ENCODE measurements at regions of chr4 and their contacts with region 1.

Region 1: GRCh38 chr4:89024051-89024675 is 32.8 kb downstream of the FAM13A start:
- DNase-seq: no peak
- ATAC-seq: peak; percentile 92 to 99 (median 95)
- H3K4me3 ChIP-seq: no peak overlapping the region
- H3K27ac ChIP-seq: no peak overlapping the region
- H3K4me1 ChIP-seq: peaks cover 16% of the 10 kb centered on the region
- H3K27me3 ChIP-seq: no peaks in the 10 kb centered on the region
- CTCF ChIP-seq: peak; percentile 94

Region 2: GRCh38 chr4:88523325-88524129 is 500.6 kb before region 1 on chr4 and contains the start of gene PYURF:
- intact Hi-C with region 1: loop called (anchors 5 to 10 kb)
- DNase-seq: peak; percentile 97
- ATAC-seq: peak; percentile 97 to 98 (median 97)
- H3K4me3 ChIP-seq: peak within 1 kb of the TSS; percentile 96
- H3K27ac ChIP-seq: peak within 1 kb of the TSS; percentile 95
- H3K4me1 ChIP-seq: peaks cover 12% of the 10 kb centered on the region
- H3K27me3 ChIP-seq: no peaks in the 10 kb centered on the region
- CTCF ChIP-seq: no peak
- total RNA-seq, gene PYURF: 51.8 to 82.8 (median 58.3) TPM

Region 3: GRCh38 chr4:88706574-88706973 is 317.6 kb before region 1 on chr4:
- intact Hi-C with region 1: loop called (anchors 1 to 2 kb)
- DNase-seq: peak; percentile 36 to 72
- ATAC-seq: peak; percentile 92 to 98 (median 96)
- H3K4me3 ChIP-seq: no peak overlapping the region
- H3K27ac ChIP-seq: peak overlapping the region; percentile 68
- H3K4me1 ChIP-seq: peaks cover 4% of the 10 kb centered on the region
- H3K27me3 ChIP-seq: no peaks in the 10 kb centered on the region
- CTCF ChIP-seq: peak; percentile 66

Region 4: DNA sequence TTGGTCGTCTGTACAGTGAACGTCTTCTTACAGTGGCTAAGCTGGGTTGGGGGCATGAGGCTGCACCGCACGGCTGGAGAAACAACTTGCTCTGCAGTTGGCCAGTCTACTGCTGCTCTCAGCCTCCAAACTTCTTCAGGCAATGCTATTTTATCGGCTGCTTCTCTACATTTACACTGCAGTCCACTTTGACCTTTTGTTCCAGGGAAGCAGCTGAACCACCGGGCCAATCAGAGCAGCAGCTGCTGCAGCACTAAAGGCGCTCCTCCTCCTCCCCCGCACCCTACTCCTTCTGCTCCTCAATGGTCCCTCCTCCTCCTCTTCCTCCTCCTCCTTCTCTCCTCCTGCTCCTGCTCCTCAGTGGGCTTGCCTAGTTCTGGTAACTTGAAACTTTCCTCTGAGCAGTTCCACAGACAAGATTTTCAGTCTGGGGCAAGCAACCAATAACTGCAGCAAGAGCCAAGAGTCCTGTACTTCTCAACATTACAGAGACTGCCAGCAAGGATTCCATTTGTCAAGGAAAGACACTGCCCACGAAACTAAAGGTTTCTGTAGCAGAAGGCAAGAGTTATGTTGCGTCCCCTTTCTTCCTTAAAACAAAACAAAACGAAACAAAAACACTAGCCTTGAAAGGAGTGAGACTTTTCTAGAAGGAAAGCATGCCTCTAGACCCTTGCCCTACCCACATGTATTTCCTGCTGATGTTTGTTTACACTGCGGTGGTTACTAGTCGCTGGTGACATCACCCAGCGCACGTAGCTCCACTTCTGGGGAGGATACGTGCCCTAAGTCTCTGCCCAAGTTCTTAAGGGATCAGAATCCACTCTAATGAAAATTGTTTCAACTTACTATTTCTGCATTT is 200.9 kb before region 1 on chr4:
- intact Hi-C with region 1: loop called (anchors 1 to 2 kb)
- DNase-seq: peak; percentile 80 to 91
- ATAC-seq: peak; percentile 94 to 96 (median 95)
- H3K4me3 ChIP-seq: peak overlapping the region; percentile 77
- H3K27ac ChIP-seq: peak overlapping the region; percentile 93
- H3K4me1 ChIP-seq: peaks cover 33% of the 10 kb centered on the region
- H3K27me3 ChIP-seq: no peaks in the 10 kb centered on the region
- CTCF ChIP-seq: no peak

Region 5: GRCh38 chr4:88908003-88908402 is 116.2 kb before region 1 on chr4:
- intact Hi-C with region 1: loop called in 1 of 2 experiments (anchors 5 kb)
- DNase-seq: no peak
- ATAC-seq: peak; percentile 95 to 99 (median 98)
- H3K4me3 ChIP-seq: no peak overlapping the region
- H3K27ac ChIP-seq: peak overlapping the region; percentile 64
- H3K4me1 ChIP-seq: peaks cover 22% of the 10 kb centered on the region
- H3K27me3 ChIP-seq: no peaks in the 10 kb centered on the region
- CTCF ChIP-seq: no peak

Region 6: GRCh38 chr4:88975958-88976774 is 48.0 kb before region 1 on chr4:
- intact Hi-C with region 1: no loop called
- DNase-seq: no peak
- ATAC-seq: no peak
- H3K4me3 ChIP-seq: no peak overlapping the region
- H3K27ac ChIP-seq: no peak overlapping the region
- H3K4me1 ChIP-seq: no peaks in the 10 kb centered on the region
- H3K27me3 ChIP-seq: no peaks in the 10 kb centered on the region
- CTCF ChIP-seq: no peak

Measured in psoas muscle (tissue), 8 donors.